ENCODE measurements at regions of chr7 and their contacts with region 1.

Region 1: GRCh38 chr7:47991741-47992311 is 12.4 kb upstream of the HUS1 start:
- DNase-seq: peak; percentile 81 to 87 (median 83)
- H3K4me3 ChIP-seq: peak overlapping the region; percentile 42 to 80
- H3K4me3 Mint-ChIP-seq: peak overlapping the region; percentile 87 to 97 (median 93)
- H3K27ac ChIP-seq: peak overlapping the region; percentile 55
- H3K27ac Mint-ChIP-seq: peak overlapping the region; percentile 90 to 98 (median 93)
- H3K4me1 ChIP-seq: peaks cover 15% of the 10 kb centered on the region
- H3K4me1 Mint-ChIP-seq: peaks cover 16 to 20% (median 17%) of the 10 kb centered on the region in 4 donors
- H3K27me3 ChIP-seq: no peaks in the 10 kb centered on the region
- H3K27me3 Mint-ChIP-seq: no peaks in the 10 kb centered on the region

Region 2: GRCh38 chr7:47932016-47932415 is 59.8 kb before region 1 on chr7:
- CTCF ChIA-PET with region 1: no interaction called
- POLR2A ChIA-PET with region 1: no interaction called
- intact Hi-C with region 1: no loop called
- DNase-seq: no peak
- H3K4me3 ChIP-seq: no peak overlapping the region
- H3K4me3 Mint-ChIP-seq: no peak overlapping the region
- H3K27ac ChIP-seq: no peak overlapping the region
- H3K27ac Mint-ChIP-seq: no peak overlapping the region
- H3K4me1 ChIP-seq: no peaks in the 10 kb centered on the region
- H3K4me1 Mint-ChIP-seq: no peaks in the 10 kb centered on the region
- H3K27me3 ChIP-seq: no peaks in the 10 kb centered on the region
- H3K27me3 Mint-ChIP-seq: no peaks in the 10 kb centered on the region

Region 3: DNA sequence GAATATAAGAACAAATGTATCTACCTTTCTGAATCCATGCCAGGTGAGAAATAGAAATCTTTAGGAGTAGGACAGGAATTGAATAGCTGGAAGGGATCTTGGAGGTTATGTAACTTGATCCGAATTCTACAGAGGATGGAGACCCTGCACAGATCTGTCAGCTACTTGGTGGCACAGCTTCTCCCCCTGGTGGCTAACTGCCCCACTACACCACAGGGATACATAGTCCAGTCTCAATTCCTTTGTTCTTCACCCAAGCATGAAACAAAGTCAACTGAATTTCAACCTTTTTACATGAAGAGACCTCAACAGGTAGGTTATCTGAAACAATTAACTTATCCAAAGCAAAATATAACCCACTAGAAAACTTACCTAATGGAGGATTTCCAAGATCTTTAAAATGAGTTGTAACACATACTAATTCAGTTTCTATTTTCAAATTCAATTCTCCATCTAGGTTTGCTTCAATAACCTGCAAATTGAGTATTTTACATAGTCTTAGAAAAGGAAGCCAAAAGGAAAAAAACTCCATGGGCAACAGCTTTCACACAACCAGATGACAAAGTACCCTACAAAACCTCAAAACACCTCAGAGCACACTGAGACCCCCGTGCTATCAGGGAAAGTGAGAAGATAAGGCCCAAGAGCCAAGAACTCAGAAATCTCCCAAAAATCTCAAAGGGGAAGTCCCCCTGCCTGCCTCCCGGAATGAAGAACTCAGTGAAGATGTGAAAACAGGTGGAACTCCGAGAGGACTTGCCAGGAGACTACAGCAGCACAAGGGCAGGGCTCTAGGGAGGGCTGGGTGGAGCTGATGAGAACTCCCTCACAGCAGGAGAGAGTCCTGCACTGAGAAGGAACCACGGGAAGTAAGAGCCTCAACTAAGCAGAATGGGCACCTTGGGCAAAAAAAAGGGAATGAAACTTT is 22.7 kb before region 1 on chr7:
- CTCF ChIA-PET with region 1: interaction called, 11 read pairs
- POLR2A ChIA-PET with region 1: interaction called, 3 read pairs
- intact Hi-C with region 1: no loop called
- DNase-seq: peak; percentile 20 to 60 (median 37)
- H3K4me3 ChIP-seq: no peak overlapping the region
- H3K4me3 Mint-ChIP-seq: no peak overlapping the region
- H3K27ac ChIP-seq: no peak overlapping the region
- H3K27ac Mint-ChIP-seq: peak overlapping the region; percentile 8 to 87 (median 67)
- H3K4me1 ChIP-seq: no peaks in the 10 kb centered on the region
- H3K4me1 Mint-ChIP-seq: peaks cover 14 to 27% (median 20%) of the 10 kb centered on the region in 4 donors
- H3K27me3 ChIP-seq: no peaks in the 10 kb centered on the region
- H3K27me3 Mint-ChIP-seq: no peaks in the 10 kb centered on the region

Region 4: GRCh38 chr7:48035301-48035966 is 43.6 kb after region 1 on chr7 and contains the start of gene C7orf57:
- CTCF ChIA-PET with region 1: interaction called, 4 read pairs
- POLR2A ChIA-PET with region 1: interaction called, 4 read pairs
- intact Hi-C with region 1: loop called (anchors 1 kb)
- DNase-seq: peak; percentile 83 to 88 (median 86)
- H3K4me3 ChIP-seq: peak within 1 kb of the TSS; percentile 68 to 69
- H3K4me3 Mint-ChIP-seq: peak within 1 kb of the TSS; percentile 78 to 94 (median 88)
- H3K27ac ChIP-seq: peak within 1 kb of the TSS; percentile 11
- H3K27ac Mint-ChIP-seq: peak within 1 kb of the TSS; percentile 43 to 96 (median 88)
- H3K4me1 ChIP-seq: peaks cover 7% of the 10 kb centered on the region
- H3K4me1 Mint-ChIP-seq: peaks cover 4 to 11% (median 8%) of the 10 kb centered on the region in 4 donors
- H3K27me3 ChIP-seq: no peaks in the 10 kb centered on the region
- H3K27me3 Mint-ChIP-seq: peaks cover 6 to 12% of the 10 kb centered on the region in 2 donors
- total RNA-seq, gene C7orf57: not detected

Region 5: GRCh38 chr7:48088559-48089045 is 96.8 kb after region 1 on chr7:
- CTCF ChIA-PET with region 1: interaction called, 41 read pairs
- POLR2A ChIA-PET with region 1: interaction called, 62 read pairs
- intact Hi-C with region 1: loop called (anchors 1 kb)
- DNase-seq: peak in 1 of 5 donors; percentile 87
- H3K4me3 ChIP-seq: peak overlapping the region; percentile 70 to 88
- H3K4me3 Mint-ChIP-seq: peak overlapping the region; percentile 86 to 97 (median 93)
- H3K27ac ChIP-seq: peak overlapping the region; percentile 76
- H3K27ac Mint-ChIP-seq: peak overlapping the region; percentile 88 to 98 (median 94)
- H3K4me1 ChIP-seq: peaks cover 90% of the 10 kb centered on the region
- H3K4me1 Mint-ChIP-seq: peaks cover 54 to 89% (median 72%) of the 10 kb centered on the region in 4 donors
- H3K27me3 ChIP-seq: no peaks in the 10 kb centered on the region
- H3K27me3 Mint-ChIP-seq: no peaks in the 10 kb centered on the region

Region 6: DNA sequence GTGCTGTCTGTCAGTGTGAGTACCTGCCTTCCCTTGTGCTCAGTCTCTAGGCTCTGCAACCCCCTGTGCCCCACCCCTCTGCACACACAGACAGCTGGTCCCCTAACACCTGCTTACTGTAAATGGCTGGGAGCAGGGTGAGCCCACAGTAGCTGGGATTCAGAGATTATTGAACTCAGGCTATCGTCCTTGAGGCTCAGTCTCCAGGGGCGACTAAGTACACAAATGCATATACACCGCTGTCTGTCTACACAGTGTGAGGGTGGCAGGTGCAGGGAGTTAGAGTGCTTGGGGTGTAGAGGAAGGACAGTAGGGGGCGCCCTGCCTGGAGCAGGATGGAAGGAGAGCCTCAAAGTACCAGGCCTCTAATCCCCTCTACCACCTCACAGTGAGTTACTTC is 110.1 kb after region 1 on chr7:
- CTCF ChIA-PET with region 1: interaction called, 218 read pairs
- POLR2A ChIA-PET with region 1: interaction called, 66 read pairs
- intact Hi-C with region 1: no loop called
- DNase-seq: peak in 2 of 5 donors; percentile 9 to 18
- H3K4me3 ChIP-seq: no peak overlapping the region
- H3K4me3 Mint-ChIP-seq: no peak overlapping the region
- H3K27ac ChIP-seq: no peak overlapping the region
- H3K27ac Mint-ChIP-seq: peak overlapping the region; percentile 59 to 88 (median 80)
- H3K4me1 ChIP-seq: peaks cover 55% of the 10 kb centered on the region
- H3K4me1 Mint-ChIP-seq: peaks cover 38 to 61% (median 40%) of the 10 kb centered on the region in 4 donors
- H3K27me3 ChIP-seq: no peaks in the 10 kb centered on the region
- H3K27me3 Mint-ChIP-seq: no peaks in the 10 kb centered on the region

Region 7: DNA sequence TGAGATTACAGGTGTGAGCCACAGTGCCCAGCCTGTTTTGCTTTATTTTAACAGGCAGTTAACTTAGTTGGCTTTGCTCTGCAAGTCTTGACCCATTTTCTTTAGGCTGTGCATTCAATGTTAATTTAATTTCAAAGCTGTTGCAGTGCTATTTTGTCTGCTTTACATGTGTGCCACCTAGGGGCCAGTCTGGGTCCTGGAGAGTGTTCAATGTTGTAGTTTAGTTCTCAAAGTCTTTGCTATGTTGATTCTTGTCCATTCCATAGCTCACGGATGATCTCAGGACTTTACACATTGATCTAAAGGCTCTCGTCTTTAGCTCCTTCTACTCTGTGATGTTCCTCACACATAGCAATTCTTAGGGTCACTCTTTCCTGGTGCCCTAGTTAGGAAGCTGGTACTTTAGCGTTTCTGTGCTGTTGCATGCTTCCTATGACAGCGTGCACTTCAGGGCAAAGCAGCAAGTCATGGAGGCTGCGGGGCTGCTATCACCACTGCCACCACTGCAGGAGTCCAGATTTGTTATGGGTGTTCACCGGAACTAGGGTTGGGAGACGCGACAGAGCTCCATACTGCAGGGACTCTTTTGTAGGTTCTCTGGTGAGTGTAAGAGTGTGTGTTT is 163.1 kb after region 1 on chr7:
- CTCF ChIA-PET with region 1: interaction called, 10 read pairs
- POLR2A ChIA-PET with region 1: no interaction called
- intact Hi-C with region 1: loop called (anchors 2 kb)
- DNase-seq: peak; percentile 24 to 42 (median 30)
- H3K4me3 ChIP-seq: no peak overlapping the region
- H3K4me3 Mint-ChIP-seq: no peak overlapping the region
- H3K27ac ChIP-seq: no peak overlapping the region
- H3K27ac Mint-ChIP-seq: no peak overlapping the region
- H3K4me1 ChIP-seq: no peaks in the 10 kb centered on the region
- H3K4me1 Mint-ChIP-seq: no peaks in the 10 kb centered on the region
- H3K27me3 ChIP-seq: no peaks in the 10 kb centered on the region
- H3K27me3 Mint-ChIP-seq: peaks cover 11 to 26% of the 10 kb centered on the region in 2 donors